PC-9 (cell line): ENCODE measurements at regions of chr1 and their contacts with region 1.

Region 1: GRCh38 chr1:67307251-67308060 is at the start of gene IL12RB2:
- DNase-seq: no peak
- H3K4me3 ChIP-seq: no peak within 1 kb of the TSS
- H3K27ac ChIP-seq: no peak within 1 kb of the TSS
- H3K4me1 ChIP-seq: no peaks in the 10 kb centered on the region
- H3K27me3 ChIP-seq: no peaks in the 10 kb centered on the region
- CTCF ChIP-seq: no peak
- total RNA-seq, gene IL12RB2: not detected in 2 replicates

Region 2: GRCh38 chr1:66788231-66788939 is 519.1 kb before region 1 on chr1:
- CTCF ChIA-PET with region 1: interaction called, 13 read pairs
- POLR2A ChIA-PET with region 1: no interaction called
- intact Hi-C with region 1: no loop called
- DNase-seq: peak; percentile 13 to 53
- H3K4me3 ChIP-seq: no peak overlapping the region
- H3K27ac ChIP-seq: no peak overlapping the region
- H3K4me1 ChIP-seq: peaks cover 15% of the 10 kb centered on the region
- H3K27me3 ChIP-seq: no peaks in the 10 kb centered on the region
- CTCF ChIP-seq: no peak

Region 3: GRCh38 chr1:67274623-67275325 is 32.7 kb before region 1 on chr1:
- CTCF ChIA-PET with region 1: no interaction called
- POLR2A ChIA-PET with region 1: no interaction called
- intact Hi-C with region 1: no loop called
- DNase-seq: no peak
- H3K4me3 ChIP-seq: no peak overlapping the region
- H3K27ac ChIP-seq: no peak overlapping the region
- H3K4me1 ChIP-seq: no peaks in the 10 kb centered on the region
- H3K27me3 ChIP-seq: no peaks in the 10 kb centered on the region
- CTCF ChIP-seq: no peak

Region 4: DNA sequence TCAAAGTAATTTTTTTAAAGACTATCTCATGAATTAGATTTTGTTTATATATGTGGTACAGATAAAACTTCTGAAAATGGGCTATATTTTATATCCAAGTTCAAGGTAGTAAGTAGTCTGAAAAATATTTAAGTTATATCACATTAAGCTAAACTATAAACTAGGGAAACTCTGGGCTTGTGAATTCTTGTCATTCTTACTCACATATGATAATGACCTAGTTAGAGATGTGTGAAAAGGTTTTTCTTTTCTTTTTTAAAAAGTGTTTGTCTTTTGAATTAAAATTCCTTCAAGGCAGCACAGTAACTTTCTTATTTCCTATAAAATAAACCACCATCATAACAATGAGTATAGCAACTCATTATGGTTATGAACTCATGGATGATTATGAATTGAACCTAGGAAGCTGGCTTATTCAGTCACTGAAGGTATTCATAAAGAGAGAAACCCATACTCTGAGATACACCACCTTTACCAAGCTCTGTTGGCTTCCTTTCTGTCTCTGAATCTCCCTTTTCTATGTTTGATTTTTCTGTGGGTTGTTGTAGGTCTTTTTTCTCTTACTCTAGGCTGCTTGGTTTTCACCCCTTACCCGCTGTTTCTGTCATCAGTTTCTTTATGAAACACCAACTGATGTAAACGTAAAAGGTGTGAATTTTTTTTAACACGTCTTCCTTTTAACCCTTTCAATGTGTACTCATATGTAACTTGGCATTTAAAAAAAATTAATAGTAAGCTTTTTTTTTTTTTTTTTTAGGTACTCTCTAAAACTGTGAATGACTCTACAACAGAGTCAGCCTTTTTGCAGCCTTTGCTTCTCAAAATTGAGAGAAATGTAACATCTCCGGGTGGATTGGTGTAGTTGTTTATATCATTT is 25.4 kb after region 1 on chr1:
- CTCF ChIA-PET with region 1: interaction called, 10 read pairs
- POLR2A ChIA-PET with region 1: no interaction called
- intact Hi-C with region 1: no loop called
- DNase-seq: no peak
- H3K4me3 ChIP-seq: no peak overlapping the region
- H3K27ac ChIP-seq: no peak overlapping the region
- H3K4me1 ChIP-seq: no peaks in the 10 kb centered on the region
- H3K27me3 ChIP-seq: no peaks in the 10 kb centered on the region
- CTCF ChIP-seq: no peak